Calu3 (cell line): ENCODE measurements at regions of chr3 and their contacts with region 1.

Region 1: DNA sequence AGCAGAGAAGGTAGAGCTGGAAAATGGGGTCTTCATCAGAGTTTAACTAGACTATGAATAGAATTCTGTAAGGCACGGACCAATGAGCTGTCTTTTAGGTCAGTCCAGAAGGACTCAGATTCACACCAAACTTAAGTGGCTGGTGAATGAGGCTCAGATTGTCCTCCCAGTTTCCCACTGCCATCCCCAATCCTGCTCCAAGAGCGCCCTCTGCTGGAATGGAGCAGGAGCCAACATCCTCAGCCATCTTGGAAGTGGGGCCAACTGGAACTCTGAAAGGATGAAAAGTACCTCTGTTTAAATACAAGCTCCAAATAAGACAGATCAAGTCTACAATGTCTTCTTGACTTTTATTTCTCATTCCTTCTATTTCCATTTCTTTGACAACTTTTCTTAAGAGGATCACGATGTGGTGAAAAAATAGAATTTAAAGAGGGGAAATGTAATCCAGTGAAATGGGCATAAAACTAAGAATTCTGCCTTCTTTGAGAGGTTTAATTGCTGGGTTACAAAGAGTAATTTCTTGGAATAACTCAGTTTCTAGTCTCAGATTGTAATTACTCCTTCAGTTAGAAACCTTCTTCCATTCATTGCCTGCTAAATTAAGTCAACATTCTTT is 217.1 kb upstream of the TPRG1 start:
- DNase-seq: peak; percentile 94
- H3K4me3 Mint-ChIP-seq: no peak overlapping the region
- H3K27ac Mint-ChIP-seq: no peak overlapping the region
- H3K4me1 Mint-ChIP-seq: peaks cover 24% of the 10 kb centered on the region
- H3K27me3 Mint-ChIP-seq: no peaks in the 10 kb centered on the region
- CTCF ChIP-seq: peak; percentile 98

Region 2: DNA sequence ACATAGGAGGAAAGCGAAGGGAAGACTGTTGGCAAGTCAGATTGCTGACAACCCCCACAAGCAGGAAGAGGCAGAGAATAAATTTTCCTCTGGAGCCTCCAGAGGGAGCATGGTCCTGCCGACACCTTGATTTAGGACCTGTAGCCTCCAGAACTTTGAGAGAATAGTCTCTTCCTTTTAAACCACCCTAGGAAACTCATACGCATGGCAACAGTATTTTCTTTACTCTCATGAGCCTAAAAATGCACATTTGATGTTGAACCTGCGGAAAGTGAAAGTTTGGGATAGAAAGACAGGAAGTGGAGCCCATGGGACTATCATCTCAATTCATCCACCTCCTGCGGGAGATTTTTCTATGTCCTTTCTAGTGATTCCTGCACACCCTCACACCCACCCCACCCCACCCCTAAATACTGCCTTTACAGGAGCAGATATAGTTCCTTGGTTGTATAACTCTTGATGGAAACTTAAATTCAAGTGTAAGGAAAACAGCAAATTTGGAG is 917.4 kb before region 1 on chr3:
- CTCF ChIA-PET with region 1: no interaction called
- intact Hi-C with region 1: loop called (anchors 10 kb)
- DNase-seq: peak; percentile 59
- H3K4me3 Mint-ChIP-seq: no peak overlapping the region
- H3K27ac Mint-ChIP-seq: no peak overlapping the region
- H3K4me1 Mint-ChIP-seq: peaks cover 29% of the 10 kb centered on the region
- H3K27me3 Mint-ChIP-seq: no peaks in the 10 kb centered on the region
- CTCF ChIP-seq: peak; percentile 65

Region 3: GRCh38 chr3:188362405-188362831 is 592.3 kb before region 1 on chr3:
- CTCF ChIA-PET with region 1: no interaction called
- intact Hi-C with region 1: loop called (anchors 10 kb)
- DNase-seq: peak; percentile 66
- H3K4me3 Mint-ChIP-seq: peak overlapping the region; percentile 0
- H3K27ac Mint-ChIP-seq: peak overlapping the region; percentile 23
- H3K4me1 Mint-ChIP-seq: peaks cover 44% of the 10 kb centered on the region
- H3K27me3 Mint-ChIP-seq: no peaks in the 10 kb centered on the region
- CTCF ChIP-seq: no peak

Region 4: DNA sequence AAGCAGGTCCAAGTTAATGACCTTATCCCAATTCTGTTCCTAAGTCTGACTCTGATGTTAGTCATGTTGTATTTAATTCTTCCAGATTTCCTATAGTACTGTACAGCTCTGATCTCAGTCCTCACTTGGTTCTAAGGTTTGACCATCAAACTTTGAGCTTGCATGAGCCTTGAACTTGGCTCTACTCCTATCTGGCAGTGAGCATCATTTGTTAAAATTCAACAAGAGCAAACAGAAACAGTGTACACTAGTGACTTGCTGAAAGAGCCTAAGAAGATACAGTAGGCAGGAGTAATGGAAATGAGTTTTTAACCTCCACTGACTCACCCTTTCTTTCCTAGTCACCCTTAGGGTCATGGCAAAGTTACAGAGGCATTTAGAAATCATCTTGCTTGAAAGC is 234.1 kb before region 1 on chr3:
- CTCF ChIA-PET with region 1: interaction called, 11 read pairs
- intact Hi-C with region 1: no loop called
- DNase-seq: no peak
- H3K4me3 Mint-ChIP-seq: no peak overlapping the region
- H3K27ac Mint-ChIP-seq: no peak overlapping the region
- H3K4me1 Mint-ChIP-seq: no peaks in the 10 kb centered on the region
- H3K27me3 Mint-ChIP-seq: no peaks in the 10 kb centered on the region
- CTCF ChIP-seq: no peak

Region 5: DNA sequence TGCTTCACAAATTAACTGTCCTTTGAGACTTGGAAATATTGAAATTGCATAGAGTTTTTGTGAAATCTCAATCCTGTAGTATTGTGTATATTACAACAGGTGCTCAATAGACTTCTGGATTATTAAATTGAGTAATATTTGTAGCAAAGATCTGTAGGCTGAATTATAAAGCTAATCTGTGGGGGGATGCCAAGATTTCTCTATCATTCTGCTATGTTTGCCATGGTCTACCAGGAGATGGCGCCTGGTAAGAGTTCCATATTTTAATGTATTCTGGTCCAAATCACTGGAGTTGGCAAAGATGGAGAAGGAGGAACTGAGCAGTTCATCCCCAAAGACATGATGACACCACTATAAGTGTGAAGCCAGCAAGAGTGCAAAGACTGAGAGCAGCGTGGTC is 123.8 kb before region 1 on chr3:
- CTCF ChIA-PET with region 1: interaction called, 6 read pairs
- intact Hi-C with region 1: loop called (anchors 1 kb)
- DNase-seq: peak; percentile 10
- H3K4me3 Mint-ChIP-seq: no peak overlapping the region
- H3K27ac Mint-ChIP-seq: no peak overlapping the region
- H3K4me1 Mint-ChIP-seq: no peaks in the 10 kb centered on the region
- H3K27me3 Mint-ChIP-seq: no peaks in the 10 kb centered on the region
- CTCF ChIP-seq: peak; percentile 40

Region 6: DNA sequence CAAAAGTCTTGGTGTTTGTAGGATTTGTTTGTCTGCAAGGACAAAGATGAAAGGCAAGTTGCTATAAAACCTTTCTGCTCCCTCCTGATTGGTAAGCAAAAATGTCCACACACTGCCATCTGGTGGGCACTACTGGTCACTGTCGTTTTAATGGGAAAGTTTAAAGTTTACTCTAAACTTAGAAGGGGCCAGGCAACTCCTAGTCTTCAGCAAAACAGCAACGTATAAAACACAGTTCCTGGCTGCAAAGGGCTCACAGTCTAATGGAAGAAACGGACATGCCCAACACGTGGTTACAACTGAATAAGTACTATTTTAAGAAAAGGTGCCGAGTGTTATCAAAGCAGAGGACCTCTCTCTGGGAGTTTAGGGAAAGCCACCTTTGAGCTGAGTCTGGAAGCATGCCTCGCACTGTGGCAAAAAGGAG is 193.4 kb after region 1 on chr3:
- CTCF ChIA-PET with region 1: interaction called, 3 read pairs
- intact Hi-C with region 1: loop called (anchors 2 kb)
- DNase-seq: peak; percentile 74
- H3K4me3 Mint-ChIP-seq: no peak overlapping the region
- H3K27ac Mint-ChIP-seq: no peak overlapping the region
- H3K4me1 Mint-ChIP-seq: peaks cover 27% of the 10 kb centered on the region
- H3K27me3 Mint-ChIP-seq: no peaks in the 10 kb centered on the region
- CTCF ChIP-seq: peak; percentile 81

Region 7: GRCh38 chr3:189186101-189186500 is 231.4 kb after region 1 on chr3:
- CTCF ChIA-PET with region 1: no interaction called
- intact Hi-C with region 1: no loop called
- DNase-seq: peak; percentile 75
- H3K4me3 Mint-ChIP-seq: no peak overlapping the region
- H3K27ac Mint-ChIP-seq: peak overlapping the region; percentile 87
- H3K4me1 Mint-ChIP-seq: peaks cover 52% of the 10 kb centered on the region
- H3K27me3 Mint-ChIP-seq: no peaks in the 10 kb centered on the region
- CTCF ChIP-seq: no peak